ENCODE measurements at regions of chr1 and their contacts with region 1.

Region 1: GRCh38 chr1:89987170-89987819 is 7.6 kb upstream of the ZNF326 start:
- DNase-seq: peak; percentile 76
- H3K4me3 ChIP-seq: no peak overlapping the region
- H3K27ac ChIP-seq: no peak overlapping the region
- H3K4me1 ChIP-seq: peaks cover 5% of the 10 kb centered on the region
- H3K27me3 ChIP-seq: no peaks in the 10 kb centered on the region
- CTCF ChIP-seq: peak; percentile 85

Region 2: DNA sequence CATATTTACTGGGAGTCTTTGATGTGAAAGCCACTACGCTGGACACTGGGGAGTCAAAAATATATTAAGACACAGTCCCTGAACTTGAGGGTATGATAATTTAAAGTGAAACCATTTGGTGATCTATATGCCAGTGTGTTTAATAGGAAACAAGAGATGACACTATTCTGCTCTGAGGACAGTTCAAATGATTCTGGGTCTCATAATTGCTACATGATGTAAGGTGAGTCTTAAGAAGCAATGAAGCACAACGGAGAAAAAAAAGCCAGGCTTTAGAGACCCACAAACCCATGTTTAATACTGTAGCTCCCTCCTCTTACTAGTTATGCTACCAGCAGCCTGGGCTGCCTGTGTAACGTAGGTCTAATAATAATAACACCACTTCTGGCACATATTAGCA is 180.7 kb before region 1 on chr1:
- intact Hi-C with region 1: loop called (anchors 2 kb)
- DNase-seq: no peak
- H3K4me3 ChIP-seq: no peak overlapping the region
- H3K27ac ChIP-seq: no peak overlapping the region
- H3K4me1 ChIP-seq: no peaks in the 10 kb centered on the region
- H3K27me3 ChIP-seq: no peaks in the 10 kb centered on the region
- CTCF ChIP-seq: no peak

Region 3: DNA sequence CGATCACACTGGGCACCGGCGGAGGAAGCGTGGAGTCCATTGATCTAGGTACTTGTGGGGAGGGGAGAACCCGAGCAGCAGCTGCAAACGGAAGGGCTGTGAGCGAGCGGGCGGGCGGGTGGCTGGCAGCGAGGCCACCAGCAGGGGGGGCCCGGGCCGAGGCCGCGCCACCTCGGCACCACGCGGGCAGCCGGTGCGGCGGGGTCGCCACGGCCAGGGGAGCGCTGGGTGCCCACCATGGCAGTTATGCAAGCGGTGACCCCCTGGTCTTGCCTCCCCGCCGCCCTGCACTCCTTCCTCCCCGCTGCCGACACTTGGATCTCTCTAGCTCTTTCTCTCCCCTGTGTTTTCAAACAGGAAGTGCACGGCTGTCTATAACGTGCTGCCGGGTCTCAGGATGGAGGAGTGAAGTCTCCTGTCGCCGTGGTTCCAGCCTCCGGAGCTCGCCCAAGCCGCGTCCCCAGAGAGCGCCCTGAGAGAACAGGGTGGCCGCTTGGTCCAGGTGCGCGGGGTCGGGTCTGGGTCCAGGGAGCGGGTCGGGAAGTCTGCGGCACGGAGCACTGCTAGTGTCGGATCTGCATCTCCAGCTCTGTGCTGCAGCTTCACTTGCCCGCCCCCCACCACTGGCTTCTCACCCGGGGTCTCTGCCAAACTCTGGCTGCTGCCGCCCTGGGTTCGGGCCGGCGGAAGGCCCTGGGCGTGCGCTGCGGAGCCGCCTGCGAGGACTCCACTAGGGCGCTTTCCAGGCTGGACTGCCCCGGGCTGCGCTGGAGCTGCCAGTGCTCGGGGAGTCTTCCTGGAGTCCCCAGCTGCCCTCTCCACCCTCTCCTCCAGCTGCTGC is 143.8 kb before region 1 on chr1:
- intact Hi-C with region 1: loop called (anchors 5 kb)
- DNase-seq: peak; percentile 77
- H3K4me3 ChIP-seq: peak overlapping the region; percentile 70
- H3K27ac ChIP-seq: peak overlapping the region; percentile 71
- H3K4me1 ChIP-seq: peaks cover 7% of the 10 kb centered on the region
- H3K27me3 ChIP-seq: no peaks in the 10 kb centered on the region
- CTCF ChIP-seq: peak; percentile 79

Measured in colonic mucosa (tissue), 4 donors.